ENCODE measurements at regions of chr14 and their contacts with region 1.

Region 1: DNA sequence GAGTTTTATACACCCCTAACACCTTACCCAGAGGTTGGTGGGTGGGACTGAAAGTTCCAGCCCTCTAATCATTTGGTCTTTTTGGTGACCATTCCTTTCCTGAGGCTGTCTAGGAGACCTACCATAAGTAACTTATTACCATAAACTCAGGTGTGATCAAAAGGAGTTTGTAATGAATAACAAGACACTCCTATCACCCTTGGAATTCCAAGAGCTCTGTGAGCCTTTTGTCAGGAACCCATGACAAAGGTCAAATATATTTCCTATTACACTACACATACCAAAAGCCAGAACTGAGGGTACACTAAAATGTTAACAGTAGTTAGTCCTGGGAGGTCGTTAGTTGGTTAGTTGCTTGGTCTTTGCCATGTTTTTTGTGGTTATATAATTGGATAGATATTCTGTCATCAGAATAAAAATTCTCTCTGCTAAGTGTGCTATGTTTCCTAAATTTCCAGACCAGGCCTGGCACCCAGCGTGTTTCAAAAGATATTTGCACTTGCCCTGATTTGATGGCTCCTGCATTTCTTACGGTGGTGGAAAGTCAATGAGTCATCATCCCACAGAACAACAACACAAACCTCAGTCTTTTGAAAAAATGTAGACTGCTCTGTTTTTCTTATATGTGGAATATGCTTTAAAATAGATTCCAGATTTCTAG is 27.0 kb upstream of the AKAP5 start:
- DNase-seq: peak; percentile 65 to 94
- H3K4me3 ChIP-seq: peak overlapping the region; percentile 30; the same call in 1 of the 2 replicates
- H3K27ac ChIP-seq: peak overlapping the region; percentile 82
- H3K4me1 ChIP-seq: peaks cover 34% of the 10 kb centered on the region
- H3K27me3 ChIP-seq: no peaks in the 10 kb centered on the region
- CTCF ChIP-seq: no peak

Region 2: DNA sequence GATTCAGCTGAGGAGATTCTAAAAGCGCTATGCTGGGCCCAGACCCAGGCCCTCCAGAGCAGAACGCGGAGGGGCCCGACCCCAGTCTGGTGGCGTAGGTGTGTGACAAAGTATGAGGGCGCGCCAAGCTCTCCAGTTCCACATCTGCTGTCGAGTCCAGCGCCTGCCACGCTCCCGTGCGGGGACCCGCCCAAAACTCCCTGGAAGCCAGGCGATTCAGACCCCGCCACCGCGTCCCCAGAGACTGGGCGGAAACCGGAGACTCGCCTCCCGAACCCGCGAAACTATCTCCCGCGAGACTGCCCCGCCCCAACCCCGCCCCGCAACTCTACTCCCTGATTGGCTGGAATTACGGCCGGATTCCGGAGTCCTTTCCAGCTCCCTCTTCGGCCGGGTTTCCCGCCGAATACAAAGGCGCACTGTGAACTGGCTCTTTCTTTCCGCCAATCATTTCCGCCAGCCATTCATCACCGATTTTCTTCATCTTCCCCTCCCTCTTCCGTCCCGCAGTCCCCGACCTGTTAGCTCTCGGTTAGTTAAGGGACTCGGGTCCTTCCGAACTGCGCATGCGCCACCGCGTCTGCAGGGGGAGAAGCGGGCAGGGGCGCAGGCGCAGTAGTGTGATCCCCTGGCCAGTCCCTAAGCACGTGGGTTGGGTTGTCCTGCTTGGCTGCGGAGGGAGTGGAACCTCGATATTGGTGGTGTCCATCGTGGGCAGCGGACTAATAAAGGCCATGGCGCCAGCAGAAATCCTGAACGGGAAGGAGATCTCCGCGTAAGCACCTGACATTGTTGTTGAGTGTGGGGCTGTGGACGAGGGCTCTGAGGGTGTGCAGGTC is 50.4 kb before region 1 on chr14 and contains the start of gene MTHFD1:
- CTCF ChIA-PET with region 1: no interaction called
- POLR2A ChIA-PET with region 1: no interaction called
- intact Hi-C with region 1: loop called (anchors 1 kb)
- DNase-seq: peak; percentile 98 to 99
- H3K4me3 ChIP-seq: peak within 1 kb of the TSS; percentile 73
- H3K27ac ChIP-seq: peak within 1 kb of the TSS; percentile 72
- H3K4me1 ChIP-seq: peaks cover 23% of the 10 kb centered on the region
- H3K27me3 ChIP-seq: no peaks in the 10 kb centered on the region
- CTCF ChIP-seq: no peak
- total RNA-seq, gene MTHFD1: 130 and 161 TPM in 2 replicates

Region 3: GRCh38 chr14:64478634-64479250 is 40.4 kb after region 1 on chr14:
- CTCF ChIA-PET with region 1: interaction called, 10 read pairs
- POLR2A ChIA-PET with region 1: no interaction called
- intact Hi-C with region 1: no loop called
- DNase-seq: no peak
- H3K4me3 ChIP-seq: no peak overlapping the region
- H3K27ac ChIP-seq: no peak overlapping the region
- H3K4me1 ChIP-seq: no peaks in the 10 kb centered on the region
- H3K27me3 ChIP-seq: no peaks in the 10 kb centered on the region
- CTCF ChIP-seq: peak; percentile 79

Region 4: DNA sequence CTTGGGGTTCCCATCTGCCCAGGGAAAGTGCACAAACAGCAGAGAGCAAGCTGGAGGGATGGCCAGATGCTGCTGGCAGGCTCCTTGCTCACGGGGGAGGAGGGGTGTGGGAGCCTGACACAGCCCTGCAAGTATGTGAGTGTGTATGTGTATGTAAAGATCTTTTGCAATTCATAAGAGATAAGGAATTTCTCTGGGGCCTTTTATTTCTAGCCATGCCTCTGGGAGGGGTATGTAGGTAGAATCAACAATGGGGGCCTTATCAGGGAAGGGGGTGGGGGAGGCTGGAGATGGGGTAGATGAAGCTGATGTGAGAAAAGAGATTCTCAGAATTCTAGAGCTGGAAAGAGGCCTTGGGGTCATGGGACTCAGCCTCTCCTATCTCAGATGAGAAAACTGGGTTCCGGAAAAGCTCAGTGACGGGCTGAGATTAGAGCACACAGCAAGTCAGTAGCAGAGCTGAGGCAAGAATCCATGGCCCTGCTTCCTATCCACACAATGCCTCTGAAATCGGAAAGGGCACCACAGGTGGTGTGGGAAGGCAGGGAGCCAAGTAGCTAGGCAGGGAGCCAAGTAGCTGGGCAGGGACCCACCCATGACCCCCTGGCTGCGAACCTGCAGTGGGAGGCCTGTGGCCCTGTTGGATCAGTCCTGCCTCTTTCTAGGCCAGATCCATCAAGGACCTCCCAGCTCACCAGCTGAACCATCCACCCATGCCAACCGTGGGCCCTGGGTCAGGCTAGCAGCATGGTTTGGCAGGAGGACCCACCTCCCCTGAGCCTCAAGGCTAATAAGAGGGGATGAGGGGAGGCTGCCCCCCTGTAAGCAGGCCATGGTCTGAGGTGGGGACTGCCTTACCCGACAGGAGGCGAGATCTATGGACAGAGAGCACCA is 320.6 kb after region 1 on chr14:
- CTCF ChIA-PET with region 1: no interaction called
- POLR2A ChIA-PET with region 1: no interaction called
- intact Hi-C with region 1: loop called (anchors 5 kb)
- DNase-seq: peak; percentile 77 to 85
- H3K4me3 ChIP-seq: no peak overlapping the region
- H3K27ac ChIP-seq: peak overlapping the region; percentile 34
- H3K4me1 ChIP-seq: peaks cover 79% of the 10 kb centered on the region
- H3K27me3 ChIP-seq: no peaks in the 10 kb centered on the region
- CTCF ChIP-seq: no peak

Region 5: DNA sequence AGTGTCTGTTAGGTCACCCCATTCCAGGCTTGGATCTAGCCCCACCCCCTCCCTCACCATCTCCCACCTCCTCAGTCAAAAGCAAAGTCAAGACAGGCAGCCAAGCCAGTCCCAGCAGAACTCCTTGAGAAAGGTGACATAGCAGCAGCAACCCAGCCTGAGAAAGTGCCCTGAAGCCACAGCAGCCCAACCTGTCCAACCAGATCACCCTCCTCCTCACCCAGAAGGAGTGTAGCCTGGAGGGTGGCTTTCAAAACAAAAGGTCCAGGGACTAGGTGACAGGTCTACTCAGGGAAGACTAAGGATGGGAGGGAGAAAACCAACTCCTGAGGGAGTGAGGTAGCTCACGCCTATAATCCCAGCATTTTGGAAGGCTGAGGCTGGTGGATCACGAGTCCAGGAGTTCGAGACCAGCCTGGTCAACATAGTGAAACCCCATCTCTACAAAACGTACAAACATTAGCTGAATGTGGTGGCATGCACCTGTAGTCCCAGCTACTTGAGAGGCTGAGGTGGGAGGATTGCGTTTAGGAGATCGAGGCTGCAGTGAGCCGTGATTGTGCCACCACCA is 528.8 kb after region 1 on chr14:
- CTCF ChIA-PET with region 1: no interaction called
- POLR2A ChIA-PET with region 1: no interaction called
- intact Hi-C with region 1: loop called (anchors 1 kb)
- DNase-seq: peak; percentile 93 to 99
- H3K4me3 ChIP-seq: peak overlapping the region; percentile 38; the same call in 1 of the 2 replicates
- H3K27ac ChIP-seq: peak overlapping the region; percentile 88
- H3K4me1 ChIP-seq: peaks cover 76% of the 10 kb centered on the region
- H3K27me3 ChIP-seq: no peaks in the 10 kb centered on the region
- CTCF ChIP-seq: no peak

Measured in PC-9 (cell line).